ENCODE measurements at regions of chr4 and their contacts with region 1.

Region 1: GRCh38 chr4:80125252-80126177 is 52.5 kb upstream of the ANTXR2 start:
- DNase-seq: peak; percentile 56
- ATAC-seq: peak; percentile 86
- H3K4me3 Mint-ChIP-seq: peak overlapping the region; percentile 30
- H3K27ac Mint-ChIP-seq: peak overlapping the region; percentile 87
- H3K4me1 Mint-ChIP-seq: peaks cover 55% of the 10 kb centered on the region
- H3K27me3 Mint-ChIP-seq: no peaks in the 10 kb centered on the region
- CTCF ChIP-seq: peak; percentile 74

Region 2: DNA sequence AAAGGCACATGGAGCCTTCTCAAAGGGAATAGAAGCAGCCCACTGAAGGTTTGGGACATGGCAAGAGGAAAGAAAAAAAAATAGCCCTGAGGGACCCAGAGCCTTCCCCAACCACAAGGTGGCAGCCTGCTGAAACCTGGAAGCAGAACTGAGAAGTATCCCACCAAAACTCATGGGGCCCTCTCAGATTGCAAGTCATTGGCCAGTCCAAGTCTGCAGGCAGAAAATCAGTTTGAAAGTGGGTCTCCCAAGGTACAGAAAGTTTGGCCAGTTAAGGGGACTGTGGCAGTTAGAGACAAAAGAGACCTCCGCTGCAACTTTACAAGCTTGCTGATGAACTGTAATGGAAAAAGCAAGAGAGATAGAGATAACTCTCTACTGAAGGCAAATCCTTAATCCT is 208.3 kb before region 1 on chr4:
- CTCF ChIA-PET with region 1: interaction called, 5 read pairs
- POLR2A ChIA-PET with region 1: no interaction called
- intact Hi-C with region 1: loop called (anchors 10 kb)
- DNase-seq: peak; percentile 78
- ATAC-seq: no peak
- H3K4me3 Mint-ChIP-seq: no peak overlapping the region
- H3K27ac Mint-ChIP-seq: no peak overlapping the region
- H3K4me1 Mint-ChIP-seq: peaks cover 9% of the 10 kb centered on the region
- H3K27me3 Mint-ChIP-seq: no peaks in the 10 kb centered on the region
- CTCF ChIP-seq: peak; percentile 68

Region 3: GRCh38 chr4:79958466-79959264 is 166.8 kb before region 1 on chr4:
- CTCF ChIA-PET with region 1: no interaction called
- POLR2A ChIA-PET with region 1: no interaction called
- intact Hi-C with region 1: no loop called
- DNase-seq: no peak
- ATAC-seq: no peak
- H3K4me3 Mint-ChIP-seq: no peak overlapping the region
- H3K27ac Mint-ChIP-seq: no peak overlapping the region
- H3K4me1 Mint-ChIP-seq: no peaks in the 10 kb centered on the region
- H3K27me3 Mint-ChIP-seq: no peaks in the 10 kb centered on the region
- CTCF ChIP-seq: no peak

Region 4: GRCh38 chr4:80017125-80017854 is 108.2 kb before region 1 on chr4:
- CTCF ChIA-PET with region 1: no interaction called
- POLR2A ChIA-PET with region 1: no interaction called
- intact Hi-C with region 1: no loop called
- DNase-seq: no peak
- ATAC-seq: peak; percentile 87
- H3K4me3 Mint-ChIP-seq: no peak overlapping the region
- H3K27ac Mint-ChIP-seq: no peak overlapping the region
- H3K4me1 Mint-ChIP-seq: no peaks in the 10 kb centered on the region
- H3K27me3 Mint-ChIP-seq: no peaks in the 10 kb centered on the region
- CTCF ChIP-seq: no peak

Region 5: DNA sequence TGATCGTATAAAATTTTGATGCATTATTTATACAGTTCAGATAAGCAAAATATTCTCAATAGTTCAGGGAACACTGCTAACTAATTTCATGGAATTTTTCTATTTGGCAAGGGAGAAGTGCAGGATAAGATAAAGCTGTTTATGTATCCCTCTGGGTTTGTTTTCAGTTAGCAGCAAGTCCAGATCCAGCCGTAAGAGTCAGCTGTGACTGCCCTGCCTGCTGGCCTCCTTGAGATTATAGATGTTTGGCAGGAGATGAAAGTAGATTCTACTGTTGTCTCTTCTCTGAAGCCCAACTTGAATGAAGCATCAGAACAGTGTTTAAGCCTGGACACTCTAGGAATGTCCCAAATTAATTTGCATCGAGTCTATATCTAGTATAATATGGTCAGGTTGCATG is 82.0 kb before region 1 on chr4:
- CTCF ChIA-PET with region 1: no interaction called
- POLR2A ChIA-PET with region 1: no interaction called
- intact Hi-C with region 1: no loop called
- DNase-seq: no peak
- ATAC-seq: no peak
- H3K4me3 Mint-ChIP-seq: no peak overlapping the region
- H3K27ac Mint-ChIP-seq: no peak overlapping the region
- H3K4me1 Mint-ChIP-seq: peaks cover 5% of the 10 kb centered on the region
- H3K27me3 Mint-ChIP-seq: no peaks in the 10 kb centered on the region
- CTCF ChIP-seq: no peak

Region 6: GRCh38 chr4:80072744-80073472 is 52.6 kb before region 1 on chr4 and contains the start of gene ANTXR2:
- CTCF ChIA-PET with region 1: interaction called, 5 read pairs
- POLR2A ChIA-PET with region 1: interaction called, 3 read pairs
- intact Hi-C with region 1: loop called (anchors 5 kb)
- DNase-seq: peak; percentile 76
- ATAC-seq: peak; percentile 69
- H3K4me3 Mint-ChIP-seq: peak within 1 kb of the TSS; percentile 88
- H3K27ac Mint-ChIP-seq: peak within 1 kb of the TSS; percentile 89
- H3K4me1 Mint-ChIP-seq: peaks cover 73% of the 10 kb centered on the region
- H3K27me3 Mint-ChIP-seq: no peaks in the 10 kb centered on the region
- CTCF ChIP-seq: no peak
- total RNA-seq, gene ANTXR2: 3.0 to 3.6 TPM

Region 7: GRCh38 chr4:80138551-80139538 is 13.3 kb after region 1 on chr4:
- CTCF ChIA-PET with region 1: interaction called, 50 read pairs
- POLR2A ChIA-PET with region 1: interaction called, 3 read pairs
- intact Hi-C with region 1: no loop called
- DNase-seq: peak; percentile 79
- ATAC-seq: peak; percentile 94
- H3K4me3 Mint-ChIP-seq: no peak overlapping the region
- H3K27ac Mint-ChIP-seq: peak overlapping the region; percentile 81
- H3K4me1 Mint-ChIP-seq: peaks cover 60% of the 10 kb centered on the region
- H3K27me3 Mint-ChIP-seq: no peaks in the 10 kb centered on the region
- CTCF ChIP-seq: no peak

Region 8: GRCh38 chr4:80173401-80173800 is 47.9 kb after region 1 on chr4:
- CTCF ChIA-PET with region 1: interaction called, 153 read pairs
- POLR2A ChIA-PET with region 1: interaction called, 5 read pairs
- intact Hi-C with region 1: loop called (anchors 2 kb)
- DNase-seq: peak; percentile 75
- ATAC-seq: peak; percentile 86
- H3K4me3 Mint-ChIP-seq: peak overlapping the region; percentile 38
- H3K27ac Mint-ChIP-seq: peak overlapping the region; percentile 90
- H3K4me1 Mint-ChIP-seq: peaks cover 53% of the 10 kb centered on the region
- H3K27me3 Mint-ChIP-seq: no peaks in the 10 kb centered on the region
- CTCF ChIP-seq: no peak

Region 9: GRCh38 chr4:80370635-80371034 is 245.1 kb after region 1 on chr4:
- CTCF ChIA-PET with region 1: no interaction called
- POLR2A ChIA-PET with region 1: no interaction called
- intact Hi-C with region 1: no loop called
- DNase-seq: no peak
- ATAC-seq: no peak
- H3K4me3 Mint-ChIP-seq: no peak overlapping the region
- H3K27ac Mint-ChIP-seq: no peak overlapping the region
- H3K4me1 Mint-ChIP-seq: peaks cover 2% of the 10 kb centered on the region
- H3K27me3 Mint-ChIP-seq: no peaks in the 10 kb centered on the region
- CTCF ChIP-seq: no peak